ENCODE measurements at regions of chr5 and their contacts with region 1.

Region 1: DNA sequence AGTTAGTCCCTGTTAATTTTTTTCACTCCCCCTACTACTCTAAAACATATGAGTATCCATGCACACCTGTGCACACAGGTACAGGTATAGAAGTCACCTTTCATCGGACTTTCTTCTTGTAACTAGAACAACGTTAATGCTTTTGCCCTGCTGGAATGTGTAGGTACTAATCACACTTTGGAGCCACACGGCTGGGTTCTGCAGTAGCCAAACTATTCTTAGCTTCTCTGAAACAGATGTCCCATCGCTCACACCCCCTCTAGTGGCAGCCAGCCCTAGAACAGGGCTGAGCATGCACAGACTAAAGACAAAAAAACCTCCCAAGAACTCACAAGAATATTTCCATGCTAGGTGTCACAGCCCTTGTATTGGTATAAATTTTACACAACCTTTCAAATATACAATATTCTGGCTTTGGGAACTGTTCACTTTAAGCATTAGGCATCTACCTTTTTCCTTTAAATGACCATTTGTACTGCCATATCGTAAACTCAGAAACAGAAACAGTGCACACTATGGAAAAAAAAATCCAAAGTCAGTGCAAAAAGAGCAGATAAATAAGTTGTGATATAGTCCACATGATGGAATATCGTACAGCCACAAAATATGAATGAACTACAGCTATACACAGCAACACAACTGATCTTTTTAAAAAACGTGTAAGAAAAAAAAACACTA is 64.0 kb downstream of the RETREG1 start:
- DNase-seq: peak; percentile 11
- H3K4me3 Mint-ChIP-seq: no peak overlapping the region
- H3K27ac Mint-ChIP-seq: no peak overlapping the region
- H3K4me1 Mint-ChIP-seq: peaks cover 10% of the 10 kb centered on the region
- H3K27me3 Mint-ChIP-seq: no peaks in the 10 kb centered on the region

Region 2: DNA sequence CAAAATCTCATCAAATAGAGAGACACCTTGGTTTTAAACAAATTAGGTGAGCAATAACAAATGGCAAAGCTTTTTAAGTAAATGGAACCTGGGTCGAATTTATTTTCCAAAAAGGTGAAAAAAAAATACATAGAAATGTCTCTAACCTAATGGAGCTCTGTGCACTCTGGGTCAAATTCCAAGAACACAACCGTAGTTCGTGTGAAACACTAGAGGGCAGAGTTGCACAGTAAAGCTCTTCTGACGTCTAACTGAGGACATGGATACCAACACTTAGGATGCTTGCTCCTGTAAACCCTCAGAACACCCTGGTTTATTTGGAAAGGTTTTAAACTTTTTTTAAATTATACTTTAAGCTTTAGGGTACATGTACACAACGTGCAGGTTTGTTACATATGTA is 392.1 kb before region 1 on chr5:
- intact Hi-C with region 1: loop called (anchors 1 kb)
- DNase-seq: peak; percentile 10
- H3K4me3 Mint-ChIP-seq: no peak overlapping the region
- H3K27ac Mint-ChIP-seq: no peak overlapping the region
- H3K4me1 Mint-ChIP-seq: no peaks in the 10 kb centered on the region
- H3K27me3 Mint-ChIP-seq: no peaks in the 10 kb centered on the region

Region 3: DNA sequence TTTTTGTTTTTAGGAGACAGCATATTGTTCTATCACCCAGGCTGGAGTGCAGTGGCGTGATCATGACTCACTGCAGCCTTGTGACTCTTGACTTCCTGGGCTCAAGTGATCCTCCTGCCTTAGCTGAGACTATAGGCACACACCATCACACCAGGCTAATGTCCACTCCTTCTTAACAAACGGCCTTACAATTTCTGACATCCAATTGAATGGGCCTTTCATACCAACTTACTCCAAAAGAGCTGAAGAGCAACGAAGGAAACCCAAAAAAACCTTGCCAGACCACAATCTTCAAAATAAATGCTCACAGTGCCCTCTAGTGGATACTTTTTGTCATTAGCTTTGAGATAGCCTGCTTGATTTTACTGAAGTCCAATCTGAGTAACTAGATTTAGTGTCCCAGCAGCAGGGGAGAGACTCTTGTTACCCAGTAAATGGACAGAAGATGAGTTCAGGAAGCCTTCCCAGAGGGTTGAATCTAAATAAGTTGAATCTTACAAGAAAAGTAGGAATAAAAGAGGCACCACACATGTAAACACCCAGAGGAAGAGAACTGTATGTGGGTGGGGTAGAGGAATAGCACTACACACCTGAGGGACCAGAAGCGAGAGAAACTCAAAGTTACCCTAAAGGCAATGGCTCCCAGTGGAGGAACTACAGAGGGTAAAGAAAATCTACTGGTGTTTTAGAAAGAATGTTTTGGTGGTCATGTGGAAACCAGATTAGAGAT is 96.5 kb before region 1 on chr5:
- intact Hi-C with region 1: loop called (anchors 5 kb)
- DNase-seq: no peak
- H3K4me3 Mint-ChIP-seq: peak overlapping the region; percentile 38
- H3K27ac Mint-ChIP-seq: peak overlapping the region; percentile 85
- H3K4me1 Mint-ChIP-seq: peaks cover 57% of the 10 kb centered on the region
- H3K27me3 Mint-ChIP-seq: no peaks in the 10 kb centered on the region

Region 4: DNA sequence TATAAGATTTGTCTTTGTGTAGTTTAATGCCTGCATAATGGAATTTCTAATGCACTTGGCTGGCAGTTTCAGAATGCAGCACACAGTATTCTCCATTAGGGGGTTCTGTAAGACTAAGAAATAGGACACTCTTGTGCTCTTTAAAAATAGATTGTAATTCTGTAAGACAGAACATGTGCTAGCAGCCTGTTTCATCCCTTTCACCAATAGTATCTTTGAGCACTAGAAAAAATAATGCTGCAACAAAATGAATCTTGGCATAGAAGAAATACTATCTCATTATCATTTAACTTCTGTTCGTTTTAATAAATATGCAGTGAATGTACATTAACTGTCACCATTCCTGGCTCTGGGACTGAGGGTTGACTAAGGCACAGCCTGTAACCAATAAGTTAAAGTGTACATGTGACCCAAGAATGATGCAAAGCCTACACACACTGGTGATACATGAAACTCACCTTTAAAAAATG is 63.4 kb before region 1 on chr5:
- intact Hi-C with region 1: loop called (anchors 1 kb)
- DNase-seq: no peak
- H3K4me3 Mint-ChIP-seq: no peak overlapping the region
- H3K27ac Mint-ChIP-seq: no peak overlapping the region
- H3K4me1 Mint-ChIP-seq: peaks cover 12% of the 10 kb centered on the region
- H3K27me3 Mint-ChIP-seq: no peaks in the 10 kb centered on the region

Region 5: DNA sequence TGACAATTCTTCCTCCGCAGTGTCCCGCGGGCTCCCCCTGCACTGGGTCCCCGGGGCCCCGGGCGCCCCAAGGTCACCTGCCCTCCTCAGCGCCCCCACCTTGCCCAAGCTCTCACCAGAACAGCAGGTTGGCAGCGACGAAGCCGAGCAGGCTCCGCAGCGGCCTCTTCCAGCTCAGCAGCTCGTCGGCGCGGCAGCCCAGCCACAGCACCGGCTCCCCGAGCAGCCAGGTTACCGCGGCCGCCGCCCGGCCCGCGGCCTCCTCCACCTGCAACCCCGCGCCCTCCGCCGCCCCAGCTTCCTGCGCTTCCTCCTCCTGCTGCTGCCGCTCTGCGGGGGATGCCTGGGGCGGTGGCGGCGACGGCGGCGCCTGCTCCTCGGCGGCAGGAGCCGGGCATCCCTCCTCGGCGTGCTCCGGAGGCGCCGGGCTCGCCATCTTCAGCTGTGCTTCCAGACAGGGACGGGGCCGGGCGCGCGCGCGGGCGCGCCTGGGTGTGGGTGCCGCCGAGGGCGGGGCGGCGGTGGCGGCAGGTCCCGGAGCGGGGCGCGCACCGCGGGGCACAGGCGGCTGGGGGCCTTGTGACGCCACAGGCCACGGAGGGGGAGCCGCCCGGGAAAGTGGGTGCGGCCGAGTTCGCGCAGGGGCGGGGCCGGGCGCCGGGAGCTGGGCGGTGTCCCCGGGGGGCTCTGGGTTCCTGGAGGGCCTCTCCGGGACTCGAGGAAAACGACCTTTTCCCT is 63.9 kb after region 1 on chr5 and contains the start of gene RETREG1:
- intact Hi-C with region 1: loop called (anchors 2 kb)
- DNase-seq: peak; percentile 80
- H3K4me3 Mint-ChIP-seq: peak within 1 kb of the TSS; percentile 97
- H3K27ac Mint-ChIP-seq: peak within 1 kb of the TSS; percentile 97
- H3K4me1 Mint-ChIP-seq: peaks cover 45% of the 10 kb centered on the region
- H3K27me3 Mint-ChIP-seq: no peaks in the 10 kb centered on the region
- total RNA-seq, gene RETREG1: 22.4 and 22.5 TPM in 2 replicates

Region 6: DNA sequence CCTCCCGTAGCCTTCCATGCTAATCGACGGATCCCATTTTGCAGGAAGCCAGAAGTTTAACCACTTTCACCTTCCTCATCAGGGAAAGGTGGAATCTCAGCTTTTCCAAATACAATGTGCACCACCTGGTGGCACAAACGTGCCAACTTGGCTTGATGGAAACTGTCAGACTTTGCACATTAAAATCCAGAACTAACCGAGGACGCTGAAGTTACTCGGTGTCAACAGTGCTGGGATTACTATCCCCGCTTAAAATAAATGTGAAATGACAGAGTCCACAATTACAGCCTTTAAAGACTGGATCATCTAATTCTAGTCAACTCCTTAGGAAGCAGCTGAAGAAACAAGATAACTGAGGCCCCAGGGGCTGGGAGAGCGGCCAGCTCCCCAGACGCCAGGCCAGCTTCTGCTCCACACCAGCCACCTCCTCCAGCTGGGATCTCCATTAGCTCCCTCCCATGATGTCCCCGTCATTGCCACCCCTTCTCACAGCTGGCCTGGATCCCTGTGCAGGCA is 114.1 kb after region 1 on chr5:
- intact Hi-C with region 1: loop called (anchors 5 kb)
- DNase-seq: no peak
- H3K4me3 Mint-ChIP-seq: no peak overlapping the region
- H3K27ac Mint-ChIP-seq: no peak overlapping the region
- H3K4me1 Mint-ChIP-seq: no peaks in the 10 kb centered on the region
- H3K27me3 Mint-ChIP-seq: peaks cover 3% of the 10 kb centered on the region

Measured in activated T-helper 1 cell treated with anti-CD3 and anti-CD28 coated beads, Interleukin-12 subunit alpha, Interleukin-12 subunit beta, Interleukin-2, Interleukin-4 antibody, amounts not matched to agents 30 ng/mL and 10 ng/mL and 1 ng/mL, durations not matched to agents 14 hours and 24 hours and 36 hours (primary cell).